ENCODE measurements at regions of chr1 and their contacts with region 1.

Region 1: DNA sequence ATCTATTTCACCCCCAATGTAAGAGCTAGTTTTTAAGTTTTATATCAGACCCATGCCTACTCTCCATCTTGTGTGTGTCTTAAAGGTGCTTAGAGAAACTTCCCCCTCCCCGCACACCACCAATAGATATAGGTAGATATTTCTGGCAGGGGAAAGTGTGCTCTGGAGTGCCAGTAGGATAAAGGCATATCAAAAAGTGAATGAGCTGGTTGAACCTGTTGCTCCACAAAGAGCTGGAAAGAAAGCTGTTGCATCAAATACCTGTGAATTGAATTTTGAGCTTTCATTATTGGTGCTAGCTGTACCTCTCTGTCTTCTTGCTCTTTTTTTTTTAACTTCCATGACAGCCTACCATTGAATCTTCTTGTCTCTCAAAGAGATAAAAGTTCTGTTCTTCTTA is 32.8 kb downstream of the ARID1A start:
- DNase-seq: no peak
- ATAC-seq: no peak
- H3K4me3 ChIP-seq: no peak overlapping the region
- H3K4me3 Mint-ChIP-seq: peak overlapping the region in 1 of 3 donors; percentile 3
- H3K27ac ChIP-seq: peak overlapping the region; percentile 30
- H3K27ac Mint-ChIP-seq: peak overlapping the region; percentile 78 to 86
- H3K4me1 ChIP-seq: peaks cover 47 to 53% of the 10 kb centered on the region in 2 experiments
- H3K4me1 Mint-ChIP-seq: peaks cover 84 to 92% (median 90%) of the 10 kb centered on the region in 3 donors
- H3K27me3 ChIP-seq: no peaks in the 10 kb centered on the region
- H3K27me3 Mint-ChIP-seq: no peaks in the 10 kb centered on the region

Region 2: DNA sequence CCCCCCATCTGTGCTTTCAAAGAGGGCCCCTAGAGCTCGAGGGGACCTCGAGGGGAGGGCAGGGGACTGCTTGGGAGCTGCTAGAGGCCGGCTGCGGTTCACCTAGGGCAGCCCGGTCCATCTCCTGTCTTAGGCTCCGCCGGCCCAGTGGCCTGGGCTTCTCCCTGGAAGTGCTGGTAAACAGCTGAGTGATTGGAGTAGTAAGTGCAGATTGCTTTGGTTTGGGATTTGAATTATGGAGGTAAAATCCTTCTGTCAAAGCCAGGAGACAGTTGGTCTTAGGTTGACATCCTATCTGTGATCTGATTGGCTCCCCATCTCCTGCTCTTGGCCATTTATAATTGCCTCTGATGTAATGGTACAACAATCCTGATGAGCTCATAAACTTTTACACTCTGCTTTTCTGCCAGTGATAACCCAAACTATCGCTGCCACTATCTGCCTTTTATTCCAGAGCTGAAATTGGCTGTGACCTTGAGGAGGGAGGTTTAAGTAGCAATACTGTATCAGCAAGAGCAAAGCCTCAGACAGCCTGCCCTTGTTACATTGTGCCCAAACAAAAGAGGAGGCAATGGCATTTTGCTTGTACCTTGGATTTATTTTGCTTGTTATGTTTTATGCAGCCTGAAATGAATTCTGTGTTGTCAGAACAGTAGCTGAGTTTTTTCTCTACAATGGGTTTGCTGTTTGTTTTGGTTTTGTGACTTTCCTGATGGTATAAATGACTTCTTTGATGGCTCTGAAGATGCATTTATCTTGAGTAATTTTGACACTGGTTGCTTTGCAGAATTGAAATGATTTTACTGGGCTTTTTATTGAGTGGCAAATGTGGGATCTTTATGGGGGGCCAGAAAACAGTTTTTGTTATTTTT is 30.4 kb before region 1 on chr1:
- CTCF ChIA-PET with region 1: interaction called in 1 of 2 experiments, 10 read pairs
- POLR2A ChIA-PET with region 1: interaction called, 4 to 5 read pairs
- DNase-seq: peak in 31 of 35 experiments; percentile 3 to 81 (median 31)
- ATAC-seq: peak in 3 of 4 experiments; percentile 6 to 44 (median 13)
- H3K4me3 ChIP-seq: peak overlapping the region; percentile 86 to 88
- H3K4me3 Mint-ChIP-seq: no peak overlapping the region
- H3K27ac ChIP-seq: peak overlapping the region; percentile 61
- H3K27ac Mint-ChIP-seq: no peak overlapping the region
- H3K4me1 ChIP-seq: peaks cover 44 to 61% of the 10 kb centered on the region in 2 experiments
- H3K4me1 Mint-ChIP-seq: peaks cover 18 to 20% (median 19%) of the 10 kb centered on the region in 3 donors
- H3K27me3 ChIP-seq: no peaks in the 10 kb centered on the region
- H3K27me3 Mint-ChIP-seq: no peaks in the 10 kb centered on the region

Region 3: GRCh38 chr1:26839339-26839722 is 110.7 kb after region 1 on chr1:
- CTCF ChIA-PET with region 1: no interaction called
- POLR2A ChIA-PET with region 1: no interaction called
- DNase-seq: no peak
- ATAC-seq: no peak
- H3K4me3 ChIP-seq: no peak overlapping the region
- H3K4me3 Mint-ChIP-seq: no peak overlapping the region
- H3K27ac ChIP-seq: peak overlapping the region; percentile 84
- H3K27ac Mint-ChIP-seq: peak overlapping the region; percentile 56 to 85
- H3K4me1 ChIP-seq: peaks cover 2 to 30% of the 10 kb centered on the region in 2 experiments
- H3K4me1 Mint-ChIP-seq: peaks cover 19 to 37% (median 29%) of the 10 kb centered on the region in 3 donors
- H3K27me3 ChIP-seq: no peaks in the 10 kb centered on the region
- H3K27me3 Mint-ChIP-seq: no peaks in the 10 kb centered on the region